ENCODE measurements at regions of chr5 and their contacts with region 1.

Region 1: DNA sequence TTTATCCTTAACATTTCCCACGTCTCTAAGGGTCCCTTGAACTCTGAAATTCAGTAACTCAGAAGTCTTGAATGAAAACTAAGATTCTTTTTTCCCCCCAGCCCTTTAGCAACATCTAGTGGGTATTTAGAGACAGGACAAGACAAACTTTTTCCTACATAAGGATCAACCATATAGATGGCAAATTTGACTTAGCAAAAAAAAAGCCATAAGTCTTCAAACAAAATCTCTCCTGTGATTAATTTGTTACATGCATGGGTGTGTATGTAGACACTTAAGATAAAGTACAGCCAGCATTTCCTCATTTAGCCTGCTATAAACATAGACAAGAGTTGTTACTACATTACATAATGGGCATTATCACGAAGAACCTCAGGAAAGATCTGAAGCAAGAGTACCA is 29.1 kb upstream of the ANKRD31 start:
- DNase-seq: peak; percentile 68
- H3K4me3 ChIP-seq: no peak overlapping the region
- H3K27ac ChIP-seq: no peak overlapping the region
- H3K4me1 ChIP-seq: no peaks in the 10 kb centered on the region
- H3K27me3 ChIP-seq: no peaks in the 10 kb centered on the region
- CTCF ChIP-seq: peak; percentile 66

Region 2: DNA sequence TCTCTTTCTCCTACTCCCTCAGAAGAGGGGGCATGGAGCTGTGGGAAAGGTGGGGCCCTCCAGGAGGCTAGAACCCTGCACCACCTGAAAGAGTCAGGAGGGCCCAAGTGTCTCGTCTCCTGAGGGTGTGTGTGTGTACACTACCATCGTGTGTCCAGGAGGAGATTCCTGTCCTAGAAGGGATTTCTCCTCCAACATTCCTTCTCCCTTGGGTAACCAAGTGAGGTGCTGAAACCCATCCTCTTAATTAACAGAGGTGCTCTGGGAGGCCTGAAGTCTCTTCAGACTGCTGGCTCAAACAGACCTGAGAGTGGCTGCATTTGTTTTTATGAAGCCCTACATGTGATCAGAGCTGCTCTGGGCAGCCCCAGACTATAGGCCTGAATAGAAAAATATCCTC is 338.4 kb before region 1 on chr5:
- CTCF ChIA-PET with region 1: no interaction called
- POLR2A ChIA-PET with region 1: no interaction called
- intact Hi-C with region 1: loop called (anchors 5 kb)
- DNase-seq: no peak
- H3K4me3 ChIP-seq: no peak overlapping the region
- H3K27ac ChIP-seq: no peak overlapping the region
- H3K4me1 ChIP-seq: peaks cover 9% of the 10 kb centered on the region
- H3K27me3 ChIP-seq: no peaks in the 10 kb centered on the region
- CTCF ChIP-seq: no peak

Measured in A673 (cell line).